ENCODE measurements at regions of chr13 and their contacts with region 1.

Region 1: DNA sequence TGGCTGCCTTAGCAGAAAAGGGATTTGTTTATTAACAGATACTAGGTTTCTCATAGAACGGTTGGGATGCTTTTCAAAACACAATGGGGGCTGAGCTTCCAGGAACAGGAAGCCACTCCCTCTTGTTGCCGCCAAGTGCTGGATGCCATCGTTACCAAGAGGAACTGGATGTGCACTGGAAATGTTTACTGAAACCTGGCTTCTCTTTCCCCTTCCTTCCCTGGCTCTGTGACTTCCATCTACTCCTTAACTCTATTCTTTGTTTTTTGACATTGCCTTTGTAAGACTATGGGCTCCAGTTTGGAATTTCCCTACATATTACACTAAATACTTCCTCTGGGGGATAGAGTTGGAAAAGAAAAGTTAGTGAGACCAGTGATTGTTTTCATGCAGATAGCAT is 11.7 kb upstream of the KL start:
- DNase-seq: no peak

Region 2: GRCh38 chr13:32969516-32969941 is 35.0 kb before region 1 on chr13:
- intact Hi-C with region 1: loop called (anchors 2 kb)
- DNase-seq: no peak

Measured in cardiac septum (tissue), 1 donor.